ENCODE measurements at regions of chr1 and their contacts with region 1.

Region 1: GRCh38 chr1:206583707-206584648 is 28.3 kb downstream of the EIF2D start:
- DNase-seq: peak; percentile 70 to 93 (median 89)
- ATAC-seq: peak; percentile 18
- H3K4me3 ChIP-seq: no peak overlapping the region
- H3K4me3 Mint-ChIP-seq: peak overlapping the region; percentile 77
- H3K27ac ChIP-seq: peak overlapping the region; percentile 3 to 95
- H3K27ac Mint-ChIP-seq: peak overlapping the region; percentile 96
- H3K4me1 ChIP-seq: peaks cover 50% of the 10 kb centered on the region
- H3K4me1 Mint-ChIP-seq: peaks cover 68% of the 10 kb centered on the region
- H3K27me3 ChIP-seq: no peaks in the 10 kb centered on the region
- H3K27me3 Mint-ChIP-seq: no peaks in the 10 kb centered on the region
- CTCF ChIP-seq: peak; percentile 92

Region 2: GRCh38 chr1:205458777-205459566 is 1125.0 kb before region 1 on chr1:
- CTCF ChIA-PET with region 1: no interaction called
- POLR2A ChIA-PET with region 1: no interaction called
- intact Hi-C with region 1: no loop called
- DNase-seq: peak in 7 of 9 experiments; percentile 9 to 59 (median 49)
- ATAC-seq: peak; percentile 73
- H3K4me3 ChIP-seq: no peak overlapping the region
- H3K4me3 Mint-ChIP-seq: no peak overlapping the region
- H3K27ac ChIP-seq: no peak overlapping the region
- H3K27ac Mint-ChIP-seq: no peak overlapping the region
- H3K4me1 ChIP-seq: peaks cover 17% of the 10 kb centered on the region
- H3K4me1 Mint-ChIP-seq: peaks cover 12% of the 10 kb centered on the region
- H3K27me3 ChIP-seq: peaks cover 30 to 31% of the 10 kb centered on the region in 2 experiments
- H3K27me3 Mint-ChIP-seq: peaks cover 47% of the 10 kb centered on the region
- CTCF ChIP-seq: no peak

Region 3: DNA sequence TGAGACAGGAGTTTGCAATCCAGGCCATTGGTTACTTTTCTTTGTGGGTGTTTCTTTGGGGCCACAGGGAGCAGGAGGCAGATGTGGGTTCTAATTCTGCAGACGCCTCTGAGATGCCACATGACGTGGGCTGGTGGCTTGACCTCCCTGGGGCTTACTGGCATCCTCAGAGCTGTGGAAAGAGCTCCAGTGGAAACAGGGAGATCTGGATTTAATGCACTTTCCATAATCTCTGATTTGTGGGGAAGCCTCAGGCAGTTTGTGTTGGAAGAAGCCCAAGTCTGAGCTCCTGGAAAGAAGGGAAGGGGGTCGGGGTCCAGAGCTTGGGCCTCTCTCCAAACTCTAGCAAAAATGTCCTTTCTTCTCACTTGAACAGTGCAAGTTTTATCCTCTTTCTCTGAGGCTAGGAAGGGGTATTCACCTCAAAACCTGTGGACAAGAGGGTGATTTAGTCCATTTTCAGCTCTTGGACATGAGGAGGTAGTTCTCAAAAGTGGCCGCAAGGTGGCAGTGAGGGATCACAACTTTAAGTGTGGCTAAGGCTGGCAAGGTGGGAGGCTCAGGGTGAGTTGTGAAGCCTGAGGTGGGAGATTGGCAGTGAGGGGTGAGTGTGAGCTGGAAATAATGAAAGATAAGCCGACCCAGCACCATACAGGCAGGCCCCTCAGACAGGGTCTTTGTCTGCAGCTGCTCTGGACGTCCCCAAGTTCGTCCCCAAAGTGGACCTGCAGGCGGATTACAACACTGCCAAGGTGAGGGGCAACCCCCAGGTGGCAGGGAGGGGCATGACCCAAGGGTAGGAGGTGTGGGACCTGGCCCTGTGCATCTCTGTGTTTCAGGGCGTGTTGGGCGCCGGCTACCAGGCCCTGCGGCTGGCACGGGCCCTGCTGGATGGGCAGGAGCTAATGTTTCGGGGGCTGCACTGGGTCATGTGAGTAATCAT is 104.5 kb before region 1 on chr1:
- CTCF ChIA-PET with region 1: interaction called, 21 read pairs
- POLR2A ChIA-PET with region 1: interaction called, 4 read pairs
- intact Hi-C with region 1: loop called in 1 of 2 experiments (anchors 1 kb)
- DNase-seq: peak; percentile 46 to 82 (median 73)
- ATAC-seq: peak; percentile 93
- H3K4me3 ChIP-seq: no peak overlapping the region
- H3K4me3 Mint-ChIP-seq: no peak overlapping the region
- H3K27ac ChIP-seq: no peak overlapping the region
- H3K27ac Mint-ChIP-seq: peak overlapping the region; percentile 80
- H3K4me1 ChIP-seq: peaks cover 13% of the 10 kb centered on the region
- H3K4me1 Mint-ChIP-seq: peaks cover 10% of the 10 kb centered on the region
- H3K27me3 ChIP-seq: no peaks in the 10 kb centered on the region
- H3K27me3 Mint-ChIP-seq: no peaks in the 10 kb centered on the region
- CTCF ChIP-seq: peak; percentile 80

Region 4: GRCh38 chr1:206537141-206537540 is 46.8 kb before region 1 on chr1:
- CTCF ChIA-PET with region 1: interaction called, 364 read pairs
- POLR2A ChIA-PET with region 1: no interaction called
- intact Hi-C with region 1: no loop called
- DNase-seq: no peak
- ATAC-seq: no peak
- H3K4me3 ChIP-seq: no peak overlapping the region
- H3K4me3 Mint-ChIP-seq: no peak overlapping the region
- H3K27ac ChIP-seq: no peak overlapping the region
- H3K27ac Mint-ChIP-seq: no peak overlapping the region
- H3K4me1 ChIP-seq: no peaks in the 10 kb centered on the region
- H3K4me1 Mint-ChIP-seq: no peaks in the 10 kb centered on the region
- H3K27me3 ChIP-seq: no peaks in the 10 kb centered on the region
- H3K27me3 Mint-ChIP-seq: no peaks in the 10 kb centered on the region
- CTCF ChIP-seq: no peak

Region 5: GRCh38 chr1:206556750-206557635 is 27.0 kb before region 1 on chr1:
- CTCF ChIA-PET with region 1: interaction called, 709 read pairs
- POLR2A ChIA-PET with region 1: interaction called, 320 read pairs
- intact Hi-C with region 1: loop called (anchors 1 kb)
- DNase-seq: peak; percentile 72 to 95 (median 92)
- ATAC-seq: peak; percentile 64
- H3K4me3 ChIP-seq: peak overlapping the region; percentile 82 to 94
- H3K4me3 Mint-ChIP-seq: peak overlapping the region; percentile 95
- H3K27ac ChIP-seq: peak overlapping the region; percentile 81
- H3K27ac Mint-ChIP-seq: peak overlapping the region; percentile 95
- H3K4me1 ChIP-seq: peaks cover 69% of the 10 kb centered on the region
- H3K4me1 Mint-ChIP-seq: peaks cover 79% of the 10 kb centered on the region
- H3K27me3 ChIP-seq: no peaks in the 10 kb centered on the region
- H3K27me3 Mint-ChIP-seq: no peaks in the 10 kb centered on the region
- CTCF ChIP-seq: no peak